ENCODE measurements at regions of chr19 and their contacts with region 1.

Region 1: DNA sequence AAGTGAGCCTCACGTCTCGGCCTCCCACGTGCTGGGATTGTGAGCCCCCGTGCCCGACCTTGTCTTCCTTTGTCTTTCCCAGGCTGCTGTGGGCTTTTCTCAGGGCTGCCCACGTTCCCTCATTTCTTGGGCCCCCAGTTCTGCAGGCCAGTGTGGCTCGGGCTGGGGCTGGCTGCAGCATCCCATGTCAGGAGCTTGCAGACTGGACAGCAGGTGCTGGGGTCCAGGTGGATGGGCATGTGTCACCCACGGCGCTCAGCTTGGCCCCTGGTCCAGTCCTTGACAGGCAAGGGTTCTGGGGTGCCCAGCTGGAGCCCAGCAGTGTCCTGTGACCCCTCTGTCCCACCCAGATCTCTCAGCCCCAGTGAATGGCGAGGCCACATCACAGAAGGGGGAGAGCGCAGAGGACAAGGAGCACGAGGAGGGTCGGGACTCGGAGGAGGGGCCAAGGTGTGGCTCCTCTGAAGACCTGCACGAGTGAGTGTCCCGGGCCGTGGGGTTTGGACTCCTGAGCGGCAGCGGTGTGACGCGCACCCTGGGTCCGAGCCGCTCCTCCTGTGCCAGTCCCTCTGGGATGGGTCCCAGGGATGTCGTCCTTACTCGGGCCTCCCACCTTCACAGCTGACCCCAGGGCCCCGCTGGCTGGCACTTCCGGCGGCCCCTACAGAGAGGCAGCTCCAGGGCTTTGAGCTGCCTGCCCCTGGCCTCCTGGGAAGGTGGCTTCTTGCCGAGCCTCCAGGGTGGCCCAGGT is 17.3 kb downstream of the PLIN4 start:
- H3K4me3 ChIP-seq: no peak overlapping the region
- H3K27ac ChIP-seq: no peak overlapping the region
- H3K4me1 ChIP-seq: no peaks in the 10 kb centered on the region
- CTCF ChIP-seq: no peak

Region 2: GRCh38 chr19:4182084-4182810 is 318.8 kb before region 1 on chr19 and contains the starts of genes ANKRD24 and SIRT6:
- CTCF ChIA-PET with region 1: no interaction called
- POLR2A ChIA-PET with region 1: interaction called, 12 read pairs
- H3K4me3 ChIP-seq: peak within 1 kb of the TSS; percentile 99
- H3K27ac ChIP-seq: peak within 1 kb of the TSS; percentile 45; the same call in 1 of the 2 replicates
- H3K4me1 ChIP-seq: no peaks in the 10 kb centered on the region
- CTCF ChIP-seq: no peak

Measured in HEK293 (cell line).